Activated naive CD4-positive, alpha-beta T cell treated with anti-CD3 and anti-CD28 coated beads for 36 hours (primary cell): ENCODE measurements at regions of chr13 and their contacts with region 1.

Region 1: GRCh38 chr13:33040090-33040489 is 23.9 kb downstream of the KL start:
- DNase-seq: no peak
- H3K4me3 Mint-ChIP-seq: no peak overlapping the region
- H3K27ac Mint-ChIP-seq: no peak overlapping the region
- H3K4me1 Mint-ChIP-seq: no peaks in the 10 kb centered on the region
- H3K27me3 Mint-ChIP-seq: peaks cover 5% of the 10 kb centered on the region

Region 2: GRCh38 chr13:33052506-33053280 is 12.6 kb after region 1 on chr13:
- CTCF ChIA-PET with region 1: no interaction called
- intact Hi-C with region 1: loop called (anchors 1 kb)
- DNase-seq: no peak
- H3K4me3 Mint-ChIP-seq: no peak overlapping the region
- H3K27ac Mint-ChIP-seq: no peak overlapping the region
- H3K4me1 Mint-ChIP-seq: no peaks in the 10 kb centered on the region
- H3K27me3 Mint-ChIP-seq: peaks cover 10% of the 10 kb centered on the region

Region 3: DNA sequence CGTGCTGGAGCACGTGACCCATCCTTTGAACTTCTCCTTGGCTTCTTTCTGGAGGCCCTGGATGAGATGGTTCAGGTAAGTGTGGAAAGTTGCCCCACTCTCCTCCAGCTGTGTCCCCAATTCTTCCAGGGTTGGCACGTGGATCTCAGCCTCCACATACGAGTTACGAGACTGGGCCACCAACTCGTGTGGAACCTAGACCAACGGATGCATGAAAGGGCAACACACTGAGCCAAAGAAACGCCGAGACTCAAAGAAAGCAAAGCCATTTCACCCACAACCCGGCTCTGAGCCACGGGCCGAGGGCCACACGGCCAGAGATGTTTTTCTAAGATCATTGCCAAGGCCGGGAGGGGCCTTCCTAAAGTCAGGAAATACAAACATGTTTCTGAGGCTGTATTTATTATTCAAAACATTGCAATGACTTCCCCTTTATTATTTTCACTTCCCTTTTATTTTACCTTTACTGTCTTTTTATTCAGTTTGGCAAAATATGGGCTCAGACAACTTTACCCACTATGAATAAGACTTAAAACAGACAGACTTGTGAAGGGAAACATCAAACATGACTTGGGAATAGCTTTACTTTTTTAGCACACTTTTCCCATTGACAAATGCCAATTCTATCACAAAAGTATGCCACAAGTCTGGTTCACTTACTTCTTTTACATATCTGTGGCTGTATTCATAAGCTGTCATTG is 70.8 kb after region 1 on chr13:
- CTCF ChIA-PET with region 1: no interaction called
- intact Hi-C with region 1: no loop called
- DNase-seq: no peak
- H3K4me3 Mint-ChIP-seq: no peak overlapping the region
- H3K27ac Mint-ChIP-seq: no peak overlapping the region
- H3K4me1 Mint-ChIP-seq: no peaks in the 10 kb centered on the region
- H3K27me3 Mint-ChIP-seq: peaks cover 26% of the 10 kb centered on the region